Posterior cingulate gyrus (tissue), 11 donors: ENCODE measurements at regions of chr12 and their contacts with region 1.

Region 1: DNA sequence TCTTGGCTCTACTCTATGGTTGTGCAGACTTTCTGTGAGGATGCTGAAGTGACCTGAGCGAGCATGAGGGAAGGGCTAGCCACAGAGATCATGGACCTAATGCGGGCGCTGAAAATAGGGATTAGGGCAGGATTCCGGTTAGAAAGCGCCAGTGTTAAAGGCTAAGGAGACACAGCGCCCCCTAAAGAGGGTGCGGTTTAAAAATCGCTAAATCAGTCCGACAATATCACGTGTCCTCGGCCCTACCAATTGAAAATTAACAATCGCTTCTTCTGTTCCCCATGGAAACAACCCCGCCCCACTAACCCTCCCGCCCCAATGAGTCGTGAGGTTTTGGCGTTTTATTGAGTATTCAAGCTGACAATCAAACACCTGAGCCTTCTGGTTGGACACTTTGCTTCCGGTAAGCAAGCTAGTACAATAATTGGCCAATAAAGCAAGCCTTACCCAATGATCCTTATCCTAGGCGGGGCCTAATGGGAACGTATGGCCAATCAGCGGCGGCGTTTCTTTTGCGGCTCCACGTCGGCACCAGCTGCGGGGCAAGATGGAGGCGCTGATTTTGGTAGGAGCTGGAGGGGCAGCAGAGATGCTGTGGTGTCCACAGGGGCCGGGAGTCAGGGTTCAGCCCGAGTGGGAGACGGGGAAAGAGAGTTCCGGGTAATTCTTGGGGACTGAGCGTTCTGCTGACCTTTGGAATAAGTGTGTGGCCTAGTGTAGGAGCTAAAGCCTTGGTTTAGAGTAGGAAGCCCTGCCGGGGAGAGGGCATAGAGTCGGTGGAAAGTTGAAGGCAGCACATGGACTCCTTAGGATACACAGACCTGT is at the start of gene COPZ1:
- DNase-seq: peak; percentile 91 to 99 (median 94)

Region 2: GRCh38 chr12:54207484-54208294 is 117.1 kb before region 1 on chr12:
- intact Hi-C with region 1: no loop called
- DNase-seq: peak in 8 of 10 donors; percentile 40 to 92 (median 70)

Region 3: DNA sequence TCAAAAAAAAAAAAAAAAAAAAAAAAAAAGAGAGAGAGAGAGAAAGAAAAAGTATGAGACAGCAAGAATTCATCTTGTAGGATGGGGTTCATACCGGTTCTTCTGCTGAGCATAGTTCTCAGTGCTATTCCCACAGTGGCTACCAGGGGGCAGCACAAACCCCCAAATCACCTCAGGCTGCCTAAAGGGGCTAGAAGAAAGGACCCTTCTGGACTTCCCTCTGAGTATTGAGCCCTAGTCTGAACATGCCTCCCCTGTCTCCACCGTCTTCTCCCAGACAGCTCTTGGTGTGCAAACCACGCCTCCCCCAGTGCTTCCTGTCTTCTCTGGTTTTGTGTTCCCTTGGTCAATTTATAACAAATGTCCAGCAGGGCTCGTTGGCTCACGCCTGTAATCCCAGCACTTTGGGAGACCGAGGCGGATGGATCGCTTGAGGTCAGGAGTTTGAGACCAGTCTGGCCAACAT is 104.7 kb before region 1 on chr12:
- intact Hi-C with region 1: loop called (anchors 1 kb)
- DNase-seq: peak; percentile 52 to 94 (median 82)

Region 4: GRCh38 chr12:54259194-54260011 is 65.4 kb before region 1 on chr12:
- intact Hi-C with region 1: loop called (anchors 10 kb)
- DNase-seq: peak; percentile 71 to 98 (median 82)

Region 5: GRCh38 chr12:54359033-54359761 is 34.4 kb after region 1 on chr12:
- intact Hi-C with region 1: loop called (anchors 1 kb)
- DNase-seq: peak; percentile 94 to 99 (median 96)

Region 6: GRCh38 chr12:54486173-54486867 is 161.5 kb after region 1 on chr12:
- intact Hi-C with region 1: no loop called
- DNase-seq: no peak